ENCODE measurements at regions of chr6 and their contacts with region 1.

Region 1: GRCh38 chr6:163701762-163702161 is 287.2 kb downstream of the QKI start:
- DNase-seq: no peak
- H3K4me3 ChIP-seq: no peak overlapping the region
- H3K4me3 Mint-ChIP-seq: no peak overlapping the region
- H3K27ac Mint-ChIP-seq: no peak overlapping the region
- H3K4me1 ChIP-seq: no peaks in the 10 kb centered on the region
- H3K4me1 Mint-ChIP-seq: no peaks in the 10 kb centered on the region
- H3K27me3 ChIP-seq: no peaks in the 10 kb centered on the region
- H3K27me3 Mint-ChIP-seq: no peaks in the 10 kb centered on the region
- CTCF ChIP-seq: no peak

Region 2: GRCh38 chr6:163671355-163671754 is 30.4 kb before region 1 on chr6:
- CTCF ChIA-PET with region 1: no interaction called
- POLR2A ChIA-PET with region 1: no interaction called
- intact Hi-C with region 1: loop called (anchors 1 kb)
- DNase-seq: no peak
- H3K4me3 ChIP-seq: no peak overlapping the region
- H3K4me3 Mint-ChIP-seq: no peak overlapping the region
- H3K27ac Mint-ChIP-seq: no peak overlapping the region
- H3K4me1 ChIP-seq: no peaks in the 10 kb centered on the region
- H3K4me1 Mint-ChIP-seq: no peaks in the 10 kb centered on the region
- H3K27me3 ChIP-seq: no peaks in the 10 kb centered on the region
- H3K27me3 Mint-ChIP-seq: peaks cover 3% of the 10 kb centered on the region
- CTCF ChIP-seq: no peak

Measured in Caco-2 (cell line).